Panc1 (cell line): ENCODE measurements at regions of chr12 and their contacts with region 1.

Region 1: DNA sequence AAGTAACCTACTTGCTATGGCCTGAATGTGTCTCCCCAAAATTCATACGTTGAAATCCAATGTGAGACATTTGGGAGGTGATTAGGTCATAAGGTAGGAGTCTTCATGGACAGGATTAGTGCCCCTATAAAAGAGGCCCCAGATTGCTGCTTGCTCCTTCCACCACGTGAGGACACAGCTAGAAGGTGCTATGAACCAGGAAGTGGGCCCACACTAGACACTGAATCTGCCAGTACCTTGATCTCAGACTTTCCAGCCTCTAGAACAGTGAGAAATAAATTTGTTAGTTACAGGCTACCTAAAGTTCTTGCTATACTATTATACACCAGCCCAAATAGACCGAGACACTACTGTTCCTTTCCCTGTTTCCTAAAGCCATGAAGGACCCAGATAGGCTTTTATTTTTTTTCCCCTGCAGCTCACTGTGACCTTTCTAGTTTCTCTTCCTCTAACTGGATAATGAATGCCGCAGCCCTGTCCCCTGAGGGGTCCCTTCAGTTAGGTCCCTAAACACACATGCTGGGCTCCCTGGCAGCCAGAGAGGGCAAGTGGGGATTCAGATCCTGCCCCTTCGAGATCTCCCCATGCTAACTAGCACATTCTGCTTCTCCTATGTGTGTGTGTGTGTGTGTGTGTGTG is 19.3 kb downstream of the SLC25A3 start:
- DNase-seq: no peak
- ATAC-seq: no peak
- H3K4me3 ChIP-seq: no peak overlapping the region
- H3K27ac ChIP-seq: no peak overlapping the region
- H3K4me1 ChIP-seq: no peaks in the 10 kb centered on the region
- H3K27me3 ChIP-seq: no peaks in the 10 kb centered on the region
- CTCF ChIP-seq: no peak

Region 2: GRCh38 chr12:98516184-98516873 is 96.5 kb before region 1 on chr12:
- CTCF ChIA-PET with region 1: no interaction called
- POLR2A ChIA-PET with region 1: interaction called, 17 read pairs
- in situ Hi-C with region 1: no loop called
- intact Hi-C with region 1: no loop called
- DNase-seq: peak; percentile 55
- ATAC-seq: peak; percentile 72
- H3K4me3 ChIP-seq: peak overlapping the region; percentile 81 to 99
- H3K27ac ChIP-seq: peak overlapping the region; percentile 98
- H3K4me1 ChIP-seq: peaks cover 27% of the 10 kb centered on the region
- H3K27me3 ChIP-seq: no peaks in the 10 kb centered on the region
- CTCF ChIP-seq: peak; percentile 89

Region 3: GRCh38 chr12:98544751-98545150 is 68.1 kb before region 1 on chr12:
- CTCF ChIA-PET with region 1: no interaction called
- POLR2A ChIA-PET with region 1: no interaction called
- in situ Hi-C with region 1: no loop called
- intact Hi-C with region 1: no loop called
- DNase-seq: no peak
- ATAC-seq: no peak
- H3K4me3 ChIP-seq: no peak overlapping the region
- H3K27ac ChIP-seq: no peak overlapping the region
- H3K4me1 ChIP-seq: no peaks in the 10 kb centered on the region
- H3K27me3 ChIP-seq: no peaks in the 10 kb centered on the region
- CTCF ChIP-seq: no peak

Region 4: GRCh38 chr12:98561846-98562245 is 51.0 kb before region 1 on chr12:
- CTCF ChIA-PET with region 1: no interaction called
- POLR2A ChIA-PET with region 1: no interaction called
- in situ Hi-C with region 1: no loop called
- intact Hi-C with region 1: no loop called
- DNase-seq: no peak
- ATAC-seq: no peak
- H3K4me3 ChIP-seq: no peak overlapping the region
- H3K27ac ChIP-seq: no peak overlapping the region
- H3K4me1 ChIP-seq: no peaks in the 10 kb centered on the region
- H3K27me3 ChIP-seq: no peaks in the 10 kb centered on the region
- CTCF ChIP-seq: no peak

Region 5: DNA sequence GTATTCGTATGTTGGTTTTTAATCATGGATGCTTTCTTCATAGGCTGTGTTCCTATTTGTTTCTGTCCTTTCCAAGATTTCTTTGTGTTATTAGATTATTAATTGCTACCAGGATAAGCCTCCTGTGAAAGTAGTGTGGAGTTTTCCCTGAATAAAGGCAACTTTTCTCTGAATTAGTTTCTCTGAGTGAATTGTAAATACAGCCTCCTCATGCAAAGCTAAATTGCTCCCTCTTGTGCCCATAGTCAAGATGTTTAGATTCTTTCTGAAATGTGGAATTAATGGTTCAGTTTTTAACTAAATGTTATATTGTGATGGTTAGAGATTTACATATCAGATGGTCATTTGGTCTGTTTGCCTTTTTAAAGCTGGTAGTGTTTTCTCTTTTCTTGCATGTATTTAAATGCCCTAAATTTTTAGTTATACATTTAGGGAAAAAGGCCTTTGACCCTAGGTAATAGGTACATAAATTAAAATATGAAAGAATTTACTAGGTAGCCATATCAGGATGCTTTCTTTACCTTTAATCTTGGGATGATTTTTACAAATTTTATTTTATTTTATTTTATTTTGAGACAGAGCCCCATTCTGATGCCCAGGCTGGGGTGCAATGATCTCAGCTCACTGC is 41.2 kb after region 1 on chr12:
- CTCF ChIA-PET with region 1: interaction called, 11 read pairs
- POLR2A ChIA-PET with region 1: no interaction called
- in situ Hi-C with region 1: no loop called
- intact Hi-C with region 1: no loop called
- DNase-seq: no peak
- ATAC-seq: peak; percentile 69
- H3K4me3 ChIP-seq: no peak overlapping the region
- H3K27ac ChIP-seq: no peak overlapping the region
- H3K4me1 ChIP-seq: no peaks in the 10 kb centered on the region
- H3K27me3 ChIP-seq: no peaks in the 10 kb centered on the region
- CTCF ChIP-seq: peak; percentile 63; the same call in 1 of the 2 replicates